CD8-positive, alpha-beta T cell (primary cell): ENCODE measurements at regions of chr2 and their contacts with region 1.

Region 1: GRCh38 chr2:195498176-195498575 is 158.8 kb upstream of the SLC39A10 start:
- DNase-seq: peak; percentile 20 to 78 (median 66)
- ATAC-seq: peak; percentile 51
- H3K4me3 ChIP-seq: no peak overlapping the region
- H3K4me3 Mint-ChIP-seq: no peak overlapping the region
- H3K27ac ChIP-seq: no peak overlapping the region
- H3K27ac Mint-ChIP-seq: no peak overlapping the region
- H3K4me1 ChIP-seq: peaks cover 15% of the 10 kb centered on the region
- H3K4me1 Mint-ChIP-seq: peaks cover 47% of the 10 kb centered on the region
- H3K27me3 ChIP-seq: no peaks in the 10 kb centered on the region
- H3K27me3 Mint-ChIP-seq: no peaks in the 10 kb centered on the region
- CTCF ChIP-seq: peak; percentile 52

Region 2: GRCh38 chr2:195407782-195408181 is 90.4 kb before region 1 on chr2:
- CTCF ChIA-PET with region 1: no interaction called
- POLR2A ChIA-PET with region 1: no interaction called
- intact Hi-C with region 1: loop called in 1 of 2 experiments (anchors 10 kb)
- DNase-seq: no peak
- ATAC-seq: no peak
- H3K4me3 ChIP-seq: no peak overlapping the region
- H3K4me3 Mint-ChIP-seq: no peak overlapping the region
- H3K27ac ChIP-seq: no peak overlapping the region
- H3K27ac Mint-ChIP-seq: no peak overlapping the region
- H3K4me1 ChIP-seq: no peaks in the 10 kb centered on the region
- H3K4me1 Mint-ChIP-seq: peaks cover 3% of the 10 kb centered on the region
- H3K27me3 ChIP-seq: no peaks in the 10 kb centered on the region
- H3K27me3 Mint-ChIP-seq: no peaks in the 10 kb centered on the region
- CTCF ChIP-seq: no peak

Region 3: DNA sequence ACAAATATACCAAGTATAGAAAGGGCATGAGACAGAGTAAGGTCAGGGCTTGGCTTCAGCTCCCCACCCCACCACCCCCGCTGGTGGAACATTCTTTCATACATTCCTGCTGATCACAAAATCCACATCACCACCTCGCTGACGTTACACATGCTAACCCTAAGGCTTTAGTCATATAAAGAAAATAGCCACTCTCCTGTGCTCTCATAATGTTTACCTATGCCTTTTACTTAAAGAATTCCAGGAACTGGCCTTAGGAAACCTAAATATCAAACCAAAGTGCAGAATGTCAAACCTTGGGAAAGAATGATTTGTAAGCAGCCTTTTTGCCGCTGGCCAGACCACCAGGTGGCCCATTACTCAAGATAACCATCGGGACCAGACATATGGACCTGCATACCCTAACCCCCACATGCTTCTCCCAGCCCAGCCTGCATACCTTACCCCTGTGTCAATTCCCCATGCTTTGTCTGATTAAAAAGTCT is 22.5 kb after region 1 on chr2:
- CTCF ChIA-PET with region 1: interaction called, 10 read pairs
- POLR2A ChIA-PET with region 1: no interaction called
- intact Hi-C with region 1: no loop called
- DNase-seq: no peak
- ATAC-seq: no peak
- H3K4me3 ChIP-seq: no peak overlapping the region
- H3K4me3 Mint-ChIP-seq: no peak overlapping the region
- H3K27ac ChIP-seq: no peak overlapping the region
- H3K27ac Mint-ChIP-seq: no peak overlapping the region
- H3K4me1 ChIP-seq: no peaks in the 10 kb centered on the region
- H3K4me1 Mint-ChIP-seq: peaks cover 42% of the 10 kb centered on the region
- H3K27me3 ChIP-seq: no peaks in the 10 kb centered on the region
- H3K27me3 Mint-ChIP-seq: no peaks in the 10 kb centered on the region
- CTCF ChIP-seq: no peak

Region 4: DNA sequence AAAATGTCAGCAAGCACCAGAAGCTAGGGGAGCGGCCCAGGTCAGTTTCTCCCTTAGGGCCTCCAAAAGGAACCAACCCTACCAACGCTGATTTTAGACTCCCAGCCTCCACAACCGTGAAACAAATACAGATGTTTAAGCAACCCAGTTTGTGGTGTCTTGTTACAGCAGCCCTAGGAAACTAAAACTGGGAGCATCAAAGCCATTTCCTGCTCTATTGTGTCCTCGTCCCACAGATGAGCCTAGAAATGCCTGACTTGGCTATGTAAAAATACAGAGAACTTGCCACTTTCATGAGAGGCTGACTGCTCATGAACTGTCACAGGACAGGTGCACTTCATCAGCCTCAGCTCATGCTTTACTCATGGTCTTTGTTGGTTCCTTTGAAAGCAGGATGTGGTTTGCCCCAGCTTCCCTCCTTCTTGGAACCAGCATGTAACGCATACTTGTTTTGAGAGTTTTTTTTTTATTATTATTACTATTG is 61.3 kb after region 1 on chr2:
- CTCF ChIA-PET with region 1: interaction called, 21 read pairs
- POLR2A ChIA-PET with region 1: no interaction called
- intact Hi-C with region 1: loop called in 1 of 2 experiments (anchors 2 kb)
- DNase-seq: peak; percentile 42 to 93 (median 73)
- ATAC-seq: peak; percentile 87
- H3K4me3 ChIP-seq: peak overlapping the region in 1 of 2 experiments; percentile 17
- H3K4me3 Mint-ChIP-seq: peak overlapping the region; percentile 42
- H3K27ac ChIP-seq: peak overlapping the region; percentile 63 to 75
- H3K27ac Mint-ChIP-seq: peak overlapping the region; percentile 89
- H3K4me1 ChIP-seq: peaks cover 66% of the 10 kb centered on the region
- H3K4me1 Mint-ChIP-seq: peaks cover 69% of the 10 kb centered on the region
- H3K27me3 ChIP-seq: no peaks in the 10 kb centered on the region
- H3K27me3 Mint-ChIP-seq: no peaks in the 10 kb centered on the region
- CTCF ChIP-seq: no peak

Region 5: GRCh38 chr2:195575879-195576401 is 77.8 kb after region 1 on chr2:
- CTCF ChIA-PET with region 1: interaction called, 12 read pairs
- POLR2A ChIA-PET with region 1: interaction called, 3 read pairs
- intact Hi-C with region 1: loop called (anchors 1 to 5 kb)
- DNase-seq: peak in 2 of 9 experiments; percentile 43 to 64
- ATAC-seq: peak; percentile 57
- H3K4me3 ChIP-seq: no peak overlapping the region
- H3K4me3 Mint-ChIP-seq: peak overlapping the region; percentile 66
- H3K27ac ChIP-seq: no peak overlapping the region
- H3K27ac Mint-ChIP-seq: peak overlapping the region; percentile 84
- H3K4me1 ChIP-seq: peaks cover 51% of the 10 kb centered on the region
- H3K4me1 Mint-ChIP-seq: peaks cover 76% of the 10 kb centered on the region
- H3K27me3 ChIP-seq: no peaks in the 10 kb centered on the region
- H3K27me3 Mint-ChIP-seq: no peaks in the 10 kb centered on the region
- CTCF ChIP-seq: peak; percentile 6